Calu3 (cell line): ENCODE measurements at regions of chr3 and their contacts with region 1.

Region 1: GRCh38 chr3:161409069-161409468 is 37.8 kb upstream of the SPTSSB start:
- DNase-seq: peak; percentile 76
- H3K4me3 Mint-ChIP-seq: no peak overlapping the region
- H3K27ac Mint-ChIP-seq: peak overlapping the region; percentile 12
- H3K4me1 Mint-ChIP-seq: peaks cover 53% of the 10 kb centered on the region
- H3K27me3 Mint-ChIP-seq: no peaks in the 10 kb centered on the region
- CTCF ChIP-seq: peak; percentile 88

Region 2: DNA sequence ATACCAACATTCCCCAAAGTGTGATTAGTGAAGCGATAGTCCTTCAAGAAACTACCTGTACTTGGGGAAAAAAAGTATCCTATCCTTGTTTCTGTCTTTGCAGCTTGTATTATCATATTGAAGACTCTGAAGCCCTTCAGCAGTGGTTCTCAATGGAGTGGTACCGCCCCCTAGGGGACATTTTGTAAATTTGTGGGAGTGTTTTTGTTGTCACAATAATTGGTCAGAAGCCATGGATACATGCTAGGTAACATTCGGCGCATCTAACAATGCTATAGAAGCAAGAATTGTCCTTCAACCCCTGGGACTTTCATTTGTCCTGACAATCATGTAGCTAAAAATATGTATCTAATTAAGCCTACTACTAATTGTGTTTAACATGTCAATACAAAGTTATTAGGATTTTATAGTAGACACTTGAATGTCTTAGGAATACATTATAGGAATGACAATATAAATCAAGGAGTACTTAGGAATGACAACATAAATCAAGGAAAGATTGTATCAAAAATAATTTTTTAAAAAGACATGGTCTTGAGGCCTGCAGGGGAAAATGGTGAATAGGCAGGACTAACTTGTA is 134.3 kb before region 1 on chr3:
- CTCF ChIA-PET with region 1: interaction called, 5 read pairs
- intact Hi-C with region 1: loop called (anchors 1 kb)
- DNase-seq: peak; percentile 63
- H3K4me3 Mint-ChIP-seq: no peak overlapping the region
- H3K27ac Mint-ChIP-seq: no peak overlapping the region
- H3K4me1 Mint-ChIP-seq: no peaks in the 10 kb centered on the region
- H3K27me3 Mint-ChIP-seq: no peaks in the 10 kb centered on the region
- CTCF ChIP-seq: peak; percentile 39

Region 3: GRCh38 chr3:161305095-161305991 is 103.7 kb before region 1 on chr3:
- CTCF ChIA-PET with region 1: interaction called, 3 read pairs
- intact Hi-C with region 1: loop called (anchors 1 kb)
- DNase-seq: peak; percentile 31
- H3K4me3 Mint-ChIP-seq: no peak overlapping the region
- H3K27ac Mint-ChIP-seq: no peak overlapping the region
- H3K4me1 Mint-ChIP-seq: no peaks in the 10 kb centered on the region
- H3K27me3 Mint-ChIP-seq: no peaks in the 10 kb centered on the region
- CTCF ChIP-seq: peak; percentile 87

Region 4: DNA sequence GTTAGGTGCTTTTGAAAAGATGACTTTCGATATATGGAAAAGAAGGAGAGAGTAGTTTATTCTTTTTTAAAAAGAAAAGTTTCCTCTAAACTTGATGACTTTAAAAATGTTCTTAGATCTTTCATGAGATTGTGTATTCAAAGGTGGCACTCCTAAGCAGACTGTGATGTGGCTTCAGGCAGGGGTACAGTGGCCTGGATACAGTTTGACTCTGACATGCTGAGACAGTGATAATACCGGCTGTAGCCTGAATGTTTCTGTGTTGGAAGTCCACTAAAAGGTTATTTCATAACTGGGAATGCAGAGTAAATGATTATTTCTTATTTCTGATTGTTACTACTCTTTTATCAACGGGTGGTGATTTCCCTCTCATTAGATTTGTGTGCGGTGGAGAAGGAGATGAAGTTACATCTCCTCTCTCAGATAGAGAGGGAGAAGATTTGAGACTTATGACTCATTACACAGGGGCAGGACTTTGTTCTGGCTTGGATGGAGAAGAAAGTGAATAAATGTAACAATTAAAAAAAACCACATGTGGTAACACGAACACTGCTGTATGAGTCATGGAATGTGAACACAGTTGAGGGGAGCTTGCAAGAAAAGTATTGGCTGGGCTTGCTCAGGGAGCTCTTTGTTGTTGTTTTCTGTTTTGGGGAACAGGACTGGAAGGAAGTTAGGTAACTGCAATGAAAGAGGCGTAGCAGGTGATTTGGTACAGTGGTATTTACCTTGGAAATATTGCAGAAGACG is 59.4 kb before region 1 on chr3:
- CTCF ChIA-PET with region 1: interaction called, 4 read pairs
- intact Hi-C with region 1: loop called (anchors 1 kb)
- DNase-seq: peak; percentile 66
- H3K4me3 Mint-ChIP-seq: peak overlapping the region; percentile 14
- H3K27ac Mint-ChIP-seq: peak overlapping the region; percentile 65
- H3K4me1 Mint-ChIP-seq: peaks cover 38% of the 10 kb centered on the region
- H3K27me3 Mint-ChIP-seq: no peaks in the 10 kb centered on the region
- CTCF ChIP-seq: no peak

Region 5: DNA sequence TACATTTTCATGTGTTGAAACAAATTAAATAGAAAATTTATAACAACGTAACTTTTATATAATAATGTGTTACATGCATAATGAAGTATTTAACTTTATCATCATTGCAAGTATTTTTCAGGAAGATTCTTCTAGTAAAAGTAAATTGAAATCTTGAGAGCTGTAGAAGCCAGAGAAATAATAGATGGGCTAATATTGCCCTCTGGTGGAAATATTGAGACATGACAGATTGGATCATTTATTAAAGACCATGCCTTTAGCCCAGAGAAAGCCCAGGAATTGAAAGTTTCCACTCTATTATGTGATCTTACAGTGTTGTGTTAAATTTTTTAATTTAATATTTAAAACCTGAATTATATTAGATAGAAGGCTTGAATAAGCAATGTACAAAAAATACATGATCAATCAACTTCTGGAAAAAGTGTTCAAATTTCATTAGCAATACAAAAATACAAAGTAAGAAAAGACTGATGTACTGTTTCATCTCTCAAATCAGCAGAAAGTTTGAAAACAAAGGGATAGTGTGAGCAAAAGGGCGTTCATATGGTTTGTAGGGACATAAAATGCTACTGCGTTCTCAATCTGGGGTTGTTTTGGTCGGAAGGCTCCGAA is 14.9 kb after region 1 on chr3:
- CTCF ChIA-PET with region 1: interaction called, 3 read pairs
- intact Hi-C with region 1: loop called (anchors 2 kb)
- DNase-seq: no peak
- H3K4me3 Mint-ChIP-seq: no peak overlapping the region
- H3K27ac Mint-ChIP-seq: no peak overlapping the region
- H3K4me1 Mint-ChIP-seq: peaks cover 9% of the 10 kb centered on the region
- H3K27me3 Mint-ChIP-seq: no peaks in the 10 kb centered on the region
- CTCF ChIP-seq: peak; percentile 77

Region 6: GRCh38 chr3:161559177-161559998 is 150.3 kb after region 1 on chr3:
- CTCF ChIA-PET with region 1: no interaction called
- intact Hi-C with region 1: no loop called
- DNase-seq: peak; percentile 50
- H3K4me3 Mint-ChIP-seq: no peak overlapping the region
- H3K27ac Mint-ChIP-seq: no peak overlapping the region
- H3K4me1 Mint-ChIP-seq: peaks cover 9% of the 10 kb centered on the region
- H3K27me3 Mint-ChIP-seq: no peaks in the 10 kb centered on the region
- CTCF ChIP-seq: peak; percentile 95